ENCODE measurements at regions of chr17 and their contacts with region 1.

Region 1: GRCh38 chr17:27559506-27560481 is 71.2 kb upstream of the LGALS9 start:
- DNase-seq: peak; percentile 75
- H3K4me3 ChIP-seq: peak overlapping the region; percentile 53
- H3K27ac ChIP-seq: peak overlapping the region; percentile 84
- H3K27me3 ChIP-seq: no peaks in the 10 kb centered on the region
- CTCF ChIP-seq: peak; percentile 55

Region 2: GRCh38 chr17:27353461-27354050 is 206.2 kb before region 1 on chr17:
- CTCF ChIA-PET with region 1: interaction called, 14 read pairs
- POLR2A ChIA-PET with region 1: no interaction called
- DNase-seq: peak; percentile 81
- H3K4me3 ChIP-seq: peak overlapping the region; percentile 69
- H3K27ac ChIP-seq: peak overlapping the region; percentile 78
- H3K27me3 ChIP-seq: peaks cover 3% of the 10 kb centered on the region
- CTCF ChIP-seq: peak; percentile 53

Region 3: GRCh38 chr17:27540318-27541101 is 19.3 kb before region 1 on chr17:
- CTCF ChIA-PET with region 1: no interaction called
- POLR2A ChIA-PET with region 1: interaction called, 14 read pairs
- DNase-seq: peak; percentile 99
- H3K4me3 ChIP-seq: peak overlapping the region; percentile 48
- H3K27ac ChIP-seq: peak overlapping the region; percentile 95
- H3K27me3 ChIP-seq: no peaks in the 10 kb centered on the region
- CTCF ChIP-seq: no peak

Measured in AG04450 (cell line).